Right ventricle myocardium inferior (tissue), 1 donor: ENCODE measurements at regions of chr18 and their contacts with region 1.

Region 1: GRCh38 chr18:79393635-79394533 is 1.8 kb upstream of the NFATC1 start:
- DNase-seq: peak; percentile 97
- ATAC-seq: peak; percentile 81

Region 2: DNA sequence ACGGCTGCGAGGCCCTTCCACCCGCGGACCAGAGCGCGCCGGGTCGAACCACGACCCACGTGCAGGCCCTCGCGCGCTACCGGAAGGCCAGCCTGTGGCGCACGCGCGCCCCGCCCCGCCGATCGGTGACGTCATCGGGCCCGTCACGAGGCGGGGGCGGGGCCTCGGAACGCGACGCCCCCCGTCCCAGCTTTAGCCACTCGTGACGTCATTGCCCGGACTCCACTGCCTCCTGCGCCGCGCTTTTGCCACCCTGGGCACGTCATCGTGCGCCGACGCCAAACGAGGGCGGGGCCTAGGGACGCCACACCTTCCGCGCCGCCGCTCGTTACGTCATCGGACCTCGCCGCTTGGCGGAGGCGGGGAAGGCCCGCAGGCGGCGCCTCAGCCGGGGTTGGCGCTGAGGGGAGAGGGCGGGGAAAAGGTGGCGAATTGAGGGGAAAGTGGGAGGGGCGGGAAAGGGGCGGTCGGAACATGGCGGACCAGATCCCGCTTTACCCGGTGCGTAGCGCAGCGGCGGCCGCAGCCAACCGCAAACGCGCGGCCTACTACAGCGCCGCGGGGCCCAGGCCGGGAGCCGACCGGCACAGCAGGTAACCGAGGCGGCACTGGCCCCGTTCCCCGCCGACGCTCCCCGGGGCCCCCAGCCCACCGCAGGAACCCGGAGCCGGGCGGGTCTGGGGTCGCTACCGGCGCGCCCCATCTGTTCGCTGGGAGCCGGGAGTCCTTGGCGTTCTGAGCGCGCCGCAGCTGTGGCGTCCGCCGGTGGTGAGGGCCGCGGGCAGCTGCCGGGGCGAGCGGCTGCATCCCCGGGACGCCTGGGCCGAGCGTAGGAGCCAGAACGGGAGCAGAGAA is 324.7 kb before region 1 on chr18 and contains the start of gene ATP9B:
- intact Hi-C with region 1: loop called (anchors 5 kb)
- DNase-seq: peak; percentile 98
- ATAC-seq: peak; percentile 97
- total RNA-seq, gene ATP9B: 11.7 TPM

Region 3: GRCh38 chr18:79439201-79440023 is 45.5 kb after region 1 on chr18:
- intact Hi-C with region 1: no loop called
- DNase-seq: no peak
- ATAC-seq: no peak

Region 4: GRCh38 chr18:79458131-79458838 is 64.4 kb after region 1 on chr18:
- intact Hi-C with region 1: loop called (anchors 2 kb)
- DNase-seq: no peak
- ATAC-seq: peak; percentile 90

Region 5: DNA sequence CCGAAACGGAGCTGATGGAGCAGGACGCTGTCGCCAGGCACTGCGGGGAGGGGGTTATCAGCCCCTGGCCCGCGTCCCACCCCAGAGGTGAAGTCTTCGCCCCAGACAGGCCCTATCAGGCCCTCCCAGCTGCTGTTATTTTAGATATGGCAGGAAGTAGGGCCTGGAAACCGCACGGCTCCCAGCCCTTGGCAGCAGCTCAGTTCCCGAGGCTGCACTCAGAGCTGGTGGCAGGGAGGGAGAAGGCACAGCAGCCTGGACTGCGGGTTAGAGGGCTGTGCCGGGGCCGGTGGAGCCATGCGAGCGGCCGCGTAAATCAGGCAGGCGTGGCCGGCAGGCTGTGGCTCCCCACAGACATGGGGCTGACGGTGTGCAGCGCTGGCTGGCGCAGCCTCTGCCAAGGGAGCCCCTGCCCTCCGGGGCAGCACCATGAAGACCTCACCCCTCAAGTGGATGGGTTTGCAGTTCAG is 113.2 kb after region 1 on chr18:
- intact Hi-C with region 1: loop called (anchors 2 kb)
- DNase-seq: peak; percentile 86
- ATAC-seq: peak; percentile 92